Esophagus squamous epithelium (tissue), 5 donors: ENCODE measurements at regions of chr1 and their contacts with region 1.

Region 1: DNA sequence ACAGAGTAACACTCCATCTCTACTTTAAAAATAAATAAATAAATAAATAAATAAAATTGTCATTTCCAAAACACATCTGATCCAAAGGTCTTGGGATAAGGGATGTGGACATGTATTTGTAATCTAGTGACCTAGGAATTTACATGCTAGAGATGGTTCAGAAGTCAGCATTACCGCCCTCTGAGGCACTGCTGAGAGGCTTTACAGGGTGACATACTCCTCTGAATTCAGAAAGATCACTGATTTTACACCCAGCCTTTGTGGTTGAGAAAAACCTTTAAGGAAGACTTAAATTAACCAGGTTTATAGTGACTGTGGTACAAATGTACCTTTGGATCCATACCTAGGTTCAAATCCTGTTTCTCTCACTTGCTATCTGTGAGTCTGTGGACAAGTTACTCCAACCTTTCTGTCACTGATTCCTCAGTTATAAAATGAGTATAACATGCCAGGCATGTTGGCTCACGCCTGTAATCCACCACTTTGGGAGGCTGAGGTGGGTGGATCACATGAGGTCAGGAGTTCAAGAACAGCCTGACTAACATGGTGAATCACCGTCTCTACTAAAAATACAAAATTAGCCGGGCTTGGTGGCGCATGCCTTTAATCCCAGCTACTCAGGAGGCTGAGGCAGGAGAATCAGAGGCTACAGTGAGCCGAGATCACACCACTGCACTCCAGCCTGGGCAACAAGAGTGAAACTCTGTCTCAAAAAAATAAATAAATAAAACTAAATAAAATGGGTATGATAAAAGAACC is 20.1 kb downstream of the OSBPL9 start:
- DNase-seq: no peak
- H3K4me3 ChIP-seq: no peak overlapping the region
- H3K27ac ChIP-seq: peak overlapping the region; percentile 63 to 78 (median 77)
- H3K4me1 ChIP-seq: peaks cover 5 to 62% (median 29%) of the 10 kb centered on the region in 3 donors
- H3K27me3 ChIP-seq: no peaks in the 10 kb centered on the region
- CTCF ChIP-seq: no peak
- POLR2A ChIP-seq: no peak

Region 2: GRCh38 chr1:51768971-51769588 is 132.1 kb after region 1 on chr1:
- intact Hi-C with region 1: loop called (anchors 10 kb)
- DNase-seq: no peak
- H3K4me3 ChIP-seq: no peak overlapping the region
- H3K27ac ChIP-seq: no peak overlapping the region
- H3K4me1 ChIP-seq: no peaks in the 10 kb centered on the region
- H3K27me3 ChIP-seq: no peaks in the 10 kb centered on the region
- CTCF ChIP-seq: peak; percentile 63 to 86 (median 80)
- POLR2A ChIP-seq: no peak